ENCODE measurements at regions of chr1 and their contacts with region 1.

Region 1: DNA sequence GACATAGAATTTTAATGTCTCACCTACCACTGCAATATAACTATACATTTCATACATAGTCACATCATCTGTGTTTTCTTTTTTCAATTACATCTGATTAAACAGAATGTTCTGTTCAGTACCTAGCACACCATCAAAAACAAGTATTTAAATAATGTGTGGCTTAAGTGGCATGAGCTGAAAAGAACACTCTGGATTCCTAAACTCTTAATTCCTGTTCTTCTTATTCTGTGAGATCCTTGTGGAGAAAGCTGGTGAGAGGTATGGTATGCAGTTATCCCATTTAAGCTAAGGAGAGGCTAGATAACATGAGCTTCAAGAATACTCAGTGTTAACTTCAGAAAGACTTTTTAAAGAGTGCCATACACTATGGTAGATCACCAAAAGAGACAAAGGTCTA is 5.5 kb downstream of the TP53BP2 start:
- DNase-seq: no peak
- ATAC-seq: no peak
- H3K4me3 ChIP-seq: no peak overlapping the region
- H3K4me3 Mint-ChIP-seq: no peak overlapping the region
- H3K27ac ChIP-seq: no peak overlapping the region
- H3K27ac Mint-ChIP-seq: no peak overlapping the region
- H3K4me1 ChIP-seq: peaks cover 49% of the 10 kb centered on the region
- H3K4me1 Mint-ChIP-seq: peaks cover 47% of the 10 kb centered on the region
- H3K27me3 ChIP-seq: no peaks in the 10 kb centered on the region
- H3K27me3 Mint-ChIP-seq: no peaks in the 10 kb centered on the region
- CTCF ChIP-seq: no peak

Region 2: GRCh38 chr1:223852337-223852736 is 12.1 kb after region 1 on chr1:
- CTCF ChIA-PET with region 1: interaction called, 4 read pairs
- POLR2A ChIA-PET with region 1: no interaction called
- intact Hi-C with region 1: loop called in 1 of 2 experiments (anchors 1 kb)
- DNase-seq: no peak
- ATAC-seq: no peak
- H3K4me3 ChIP-seq: no peak overlapping the region
- H3K4me3 Mint-ChIP-seq: no peak overlapping the region
- H3K27ac ChIP-seq: no peak overlapping the region
- H3K27ac Mint-ChIP-seq: no peak overlapping the region
- H3K4me1 ChIP-seq: no peaks in the 10 kb centered on the region
- H3K4me1 Mint-ChIP-seq: no peaks in the 10 kb centered on the region
- H3K27me3 ChIP-seq: no peaks in the 10 kb centered on the region
- H3K27me3 Mint-ChIP-seq: peaks cover 8% of the 10 kb centered on the region
- CTCF ChIP-seq: no peak

Region 3: GRCh38 chr1:223886516-223886921 is 46.3 kb after region 1 on chr1:
- CTCF ChIA-PET with region 1: no interaction called
- POLR2A ChIA-PET with region 1: no interaction called
- intact Hi-C with region 1: no loop called
- DNase-seq: no peak
- ATAC-seq: no peak
- H3K4me3 ChIP-seq: no peak overlapping the region
- H3K4me3 Mint-ChIP-seq: no peak overlapping the region
- H3K27ac ChIP-seq: no peak overlapping the region
- H3K27ac Mint-ChIP-seq: no peak overlapping the region
- H3K4me1 ChIP-seq: no peaks in the 10 kb centered on the region
- H3K4me1 Mint-ChIP-seq: no peaks in the 10 kb centered on the region
- H3K27me3 ChIP-seq: no peaks in the 10 kb centered on the region
- H3K27me3 Mint-ChIP-seq: no peaks in the 10 kb centered on the region
- CTCF ChIP-seq: no peak